Gastrocnemius medialis (tissue), 4 donors: ENCODE measurements at regions of chr13 and their contacts with region 1.

Region 1: DNA sequence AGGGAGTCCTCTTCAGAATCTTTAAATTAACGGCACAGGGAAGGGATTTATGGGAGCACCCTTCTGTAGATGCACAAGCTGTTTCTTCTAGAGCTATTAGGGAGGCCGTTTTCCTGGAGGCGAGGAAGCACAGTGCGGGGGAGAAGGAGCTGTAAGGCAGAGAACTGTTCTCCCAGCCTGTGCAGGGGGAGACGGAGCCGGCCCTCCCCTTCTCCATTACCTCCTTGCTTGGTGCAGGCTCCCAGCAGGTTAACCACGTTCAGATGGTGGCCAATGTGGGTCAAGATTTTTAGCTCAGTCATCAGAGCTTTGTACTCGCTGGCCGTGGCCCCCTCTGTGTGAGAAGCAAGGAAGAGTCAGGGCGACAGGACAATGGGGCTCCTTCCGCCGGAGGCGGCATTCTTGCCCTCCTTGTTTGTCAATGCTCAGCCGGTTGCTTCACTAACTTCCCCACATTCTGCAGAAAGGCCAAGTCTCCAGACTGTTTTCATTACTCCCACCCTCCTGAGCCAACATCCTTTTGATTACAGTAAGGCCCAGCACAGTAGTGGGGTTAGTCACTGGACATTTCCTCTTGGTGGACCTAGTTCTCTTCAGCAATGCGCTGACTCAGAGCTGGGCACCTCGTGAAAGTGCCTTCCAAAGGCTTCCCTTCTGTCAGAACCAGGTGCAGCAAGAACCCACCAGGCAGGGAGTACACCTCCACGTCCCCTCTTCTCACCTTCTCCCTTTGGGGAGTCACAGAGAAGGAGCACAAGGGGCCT is 165.4 kb downstream of the FLT1 start:
- DNase-seq: no peak
- ATAC-seq: no peak
- H3K4me3 ChIP-seq: no peak overlapping the region
- H3K27ac ChIP-seq: no peak overlapping the region
- H3K4me1 ChIP-seq: peaks cover 0 to 4% of the 10 kb centered on the region in 2 donors
- H3K27me3 ChIP-seq: no peaks in the 10 kb centered on the region
- CTCF ChIP-seq: no peak
- POLR2A ChIP-seq: no peak

Region 2: DNA sequence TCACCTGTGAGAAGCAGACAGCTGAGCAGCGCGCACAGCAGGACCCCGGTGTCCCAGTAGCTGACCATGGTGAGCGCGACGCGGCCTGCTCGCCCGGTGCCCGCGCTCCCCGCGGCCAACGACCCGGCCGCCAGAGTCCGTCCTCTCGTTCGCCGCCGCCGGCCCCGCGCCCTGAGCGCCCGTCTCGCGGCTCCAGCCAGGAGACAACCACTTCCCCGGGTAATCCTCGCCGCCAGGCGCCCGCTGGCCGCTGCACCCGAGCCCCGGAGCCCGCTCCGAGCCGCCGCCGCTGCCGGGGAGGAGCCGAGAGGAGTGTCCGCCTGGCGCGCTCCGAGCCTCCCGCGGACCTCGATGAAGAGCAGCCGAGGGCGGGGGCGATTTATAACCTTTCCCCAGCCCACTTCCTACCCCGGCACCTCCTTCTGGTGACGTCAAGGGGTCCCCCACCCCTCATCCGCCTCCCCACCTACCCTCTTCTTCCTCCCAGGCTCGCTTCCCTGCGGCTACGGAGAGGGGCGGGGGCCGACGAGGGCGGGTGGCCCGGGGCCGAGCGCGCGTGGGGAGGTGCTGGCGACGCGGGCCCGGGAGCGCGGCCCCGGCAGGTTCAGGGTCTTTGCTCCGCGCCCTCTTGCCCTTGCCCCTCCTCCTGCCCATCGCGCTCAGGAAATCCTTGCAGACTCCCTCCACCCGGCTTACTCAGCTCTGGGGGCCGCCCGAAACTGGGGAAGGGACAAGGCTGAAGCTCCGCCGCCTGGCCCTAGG is 165.4 kb after region 1 on chr13 and contains the start of gene FLT1:
- in situ Hi-C with region 1: no loop called
- intact Hi-C with region 1: loop called (anchors 5 kb)
- DNase-seq: peak; percentile 18 to 31
- ATAC-seq: peak; percentile 66 to 68
- H3K4me3 ChIP-seq: peak within 1 kb of the TSS; percentile 52 to 65 (median 63)
- H3K27ac ChIP-seq: peak within 1 kb of the TSS; percentile 72 to 85 (median 82)
- H3K4me1 ChIP-seq: no peaks in the 10 kb centered on the region
- H3K27me3 ChIP-seq: peaks cover 6 to 44% (median 15%) of the 10 kb centered on the region in 3 donors
- CTCF ChIP-seq: no peak
- POLR2A ChIP-seq: peak; percentile 67 to 84
- total RNA-seq, gene FLT1: 20.7 to 42.9 (median 29.5) TPM